Heart left ventricle (tissue), 16 donors: ENCODE measurements at regions of chr5 and their contacts with region 1.

Region 1: GRCh38 chr5:82165740-82166530 is 112.2 kb downstream of the RPS23 start:
- DNase-seq: peak in 4 of 5 donors; percentile 64 to 81 (median 78)
- ATAC-seq: peak; percentile 98 to 100 (median 100)
- H3K4me3 ChIP-seq: no peak overlapping the region
- H3K27ac ChIP-seq: peak overlapping the region in 10 of 12 donors; percentile 5 to 55 (median 38)
- H3K4me1 ChIP-seq: peaks cover 0 to 26% (median 12%) of the 10 kb centered on the region in 12 donors
- H3K27me3 ChIP-seq: no peaks in the 10 kb centered on the region
- CTCF ChIP-seq: peak; percentile 53 to 87 (median 76)
- POLR2A ChIP-seq: no peak

Region 2: GRCh38 chr5:81420039-81420667 is 745.8 kb before region 1 on chr5:
- intact Hi-C with region 1: loop called in 8 of 10 experiments (anchors 2 to 5 kb)
- DNase-seq: no peak
- ATAC-seq: no peak
- H3K4me3 ChIP-seq: no peak overlapping the region
- H3K27ac ChIP-seq: no peak overlapping the region
- H3K4me1 ChIP-seq: peaks cover 0 to 6% (median under 1%) of the 10 kb centered on the region in 12 donors
- H3K27me3 ChIP-seq: no peaks in the 10 kb centered on the region
- CTCF ChIP-seq: no peak
- POLR2A ChIP-seq: no peak

Region 3: DNA sequence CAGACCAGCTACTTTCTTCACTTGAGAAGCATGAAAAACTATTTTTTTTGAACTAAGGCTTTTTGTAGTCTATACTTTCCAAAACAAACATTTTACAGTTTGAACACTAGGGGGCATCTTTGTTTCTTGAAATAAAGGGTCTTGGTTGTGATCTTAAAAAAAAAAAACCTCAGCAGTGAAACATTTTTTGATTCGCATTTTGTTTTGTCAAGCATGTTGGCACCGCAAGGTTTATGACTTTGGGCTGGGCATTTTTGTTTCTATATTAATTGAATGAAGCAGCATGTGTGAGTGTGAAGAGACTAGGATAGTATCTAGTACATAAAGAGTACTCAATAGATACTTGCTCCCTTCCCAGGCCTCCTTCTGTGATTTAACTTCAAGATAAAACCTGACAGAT is 740.4 kb before region 1 on chr5:
- intact Hi-C with region 1: loop called (anchors 2 to 5 kb)
- DNase-seq: no peak
- ATAC-seq: peak in 3 of 4 donors; percentile 35 to 62 (median 59)
- H3K4me3 ChIP-seq: no peak overlapping the region
- H3K27ac ChIP-seq: peak overlapping the region in 4 of 12 donors; percentile 1 to 28 (median 7)
- H3K4me1 ChIP-seq: peaks cover 4 to 26% (median 12%) of the 10 kb centered on the region in 12 donors
- H3K27me3 ChIP-seq: no peaks in the 10 kb centered on the region
- CTCF ChIP-seq: peak; percentile 56 to 82 (median 66)
- POLR2A ChIP-seq: no peak

Region 4: DNA sequence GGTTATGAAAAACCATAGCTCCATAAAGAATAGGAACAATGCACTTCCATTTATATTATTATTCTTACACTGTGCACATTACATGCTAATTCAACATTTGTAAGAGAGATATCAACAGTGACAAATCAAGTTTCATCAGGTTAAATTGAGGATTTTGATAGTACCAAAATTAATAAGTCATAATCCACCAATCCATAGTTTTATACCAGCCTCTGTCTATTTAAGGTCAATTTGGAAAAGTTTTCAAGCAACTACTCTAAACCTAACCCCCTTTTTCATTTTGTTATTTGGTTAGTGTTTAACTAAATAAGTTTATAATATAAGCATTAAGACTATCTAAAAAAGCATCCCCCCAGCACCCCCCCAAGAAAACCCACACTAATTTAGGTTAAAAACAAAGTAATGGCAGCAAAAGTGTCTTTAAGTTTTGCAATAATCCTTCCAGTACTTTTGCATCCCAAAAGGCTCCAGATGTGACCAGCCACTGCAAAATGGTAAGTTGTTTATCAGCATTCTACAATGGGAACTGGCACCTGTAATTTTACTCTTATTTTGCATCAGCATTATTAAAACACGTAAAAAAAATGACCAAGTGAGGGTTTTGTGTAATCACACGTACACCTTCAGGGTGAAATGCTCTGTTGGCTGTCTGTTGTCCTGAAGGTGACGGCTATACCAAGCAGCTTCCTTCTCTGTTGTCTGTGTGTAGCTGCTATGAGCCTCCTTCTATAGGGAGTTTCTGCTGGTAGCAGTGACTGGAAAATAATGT is 378.3 kb before region 1 on chr5:
- intact Hi-C with region 1: loop called in 1 of 10 experiments (anchors 10 kb)
- DNase-seq: peak in 4 of 5 donors; percentile 53 to 78 (median 66)
- ATAC-seq: peak; percentile 60 to 72 (median 63)
- H3K4me3 ChIP-seq: peak overlapping the region in 3 of 12 donors; percentile 4 to 30 (median 20)
- H3K27ac ChIP-seq: peak overlapping the region in 9 of 12 donors; percentile 11 to 42 (median 21)
- H3K4me1 ChIP-seq: peaks cover 0 to 30% (median 19%) of the 10 kb centered on the region in 12 donors
- H3K27me3 ChIP-seq: no peaks in the 10 kb centered on the region
- CTCF ChIP-seq: no peak
- POLR2A ChIP-seq: no peak

Region 5: DNA sequence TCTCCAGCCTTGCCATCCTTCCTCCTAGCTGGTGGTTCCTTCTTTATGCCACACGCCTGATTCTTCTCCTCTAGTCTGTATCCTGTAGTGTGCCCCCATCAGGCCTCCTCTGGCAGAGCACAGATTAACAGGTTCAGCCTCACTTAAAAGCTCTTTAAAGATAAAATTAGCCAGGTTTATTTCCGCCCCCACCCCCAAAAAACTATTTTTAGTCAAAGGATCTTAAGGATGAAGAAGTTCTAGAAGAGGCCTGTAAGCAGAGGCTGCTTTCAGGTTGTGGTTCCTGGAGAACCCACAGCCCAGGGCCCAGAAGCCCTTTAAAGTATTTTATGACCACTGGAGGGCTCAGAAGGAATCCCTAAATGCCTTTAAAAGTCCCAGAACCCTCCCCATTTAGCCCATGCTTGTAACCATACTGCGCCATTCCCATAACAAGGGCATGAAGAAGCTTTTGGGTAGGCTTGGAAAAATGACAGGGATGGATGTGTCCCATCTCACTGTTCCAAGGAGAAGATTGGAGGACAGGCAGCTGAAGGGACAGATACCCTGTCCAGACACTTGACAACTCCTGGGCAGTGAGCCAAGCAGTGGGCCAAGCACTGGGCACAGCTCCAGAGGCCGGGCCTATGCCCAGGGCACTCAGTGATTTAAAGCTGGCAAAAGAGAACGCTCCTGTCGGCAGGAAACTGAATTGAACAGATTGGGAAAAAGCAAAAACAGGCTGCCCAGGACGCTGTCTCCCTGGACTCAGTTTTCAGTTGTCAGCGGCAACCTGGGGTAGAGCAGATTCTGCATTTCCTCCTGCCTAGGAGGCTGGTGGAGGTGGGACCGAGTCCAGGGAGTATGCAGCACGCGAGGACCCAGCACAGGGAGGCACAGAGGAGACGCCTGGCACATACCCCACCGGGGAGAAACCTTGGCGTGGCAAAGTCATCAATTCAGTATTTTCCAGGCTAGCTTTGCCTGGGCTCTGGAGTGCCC is 308.7 kb before region 1 on chr5:
- intact Hi-C with region 1: loop called in 6 of 10 experiments (anchors 5 to 10 kb)
- DNase-seq: peak; percentile 86 to 94 (median 88)
- ATAC-seq: peak; percentile 95 to 96 (median 96)
- H3K4me3 ChIP-seq: peak overlapping the region in 6 of 12 donors; percentile 9 to 37 (median 24)
- H3K27ac ChIP-seq: peak overlapping the region; percentile 64 to 90 (median 74)
- H3K4me1 ChIP-seq: peaks cover 0 to 55% (median 22%) of the 10 kb centered on the region in 12 donors
- H3K27me3 ChIP-seq: no peaks in the 10 kb centered on the region
- CTCF ChIP-seq: peak in 10 of 12 donors; percentile 4 to 48 (median 23)
- POLR2A ChIP-seq: no peak

Region 6: GRCh38 chr5:81971712-81972495 is 194.0 kb before region 1 on chr5 and contains the start of gene ATG10:
- intact Hi-C with region 1: loop called in 2 of 10 experiments (anchors 2 to 10 kb)
- DNase-seq: peak; percentile 93 to 97 (median 94)
- ATAC-seq: peak; percentile 96 to 100 (median 99)
- H3K4me3 ChIP-seq: peak within 1 kb of the TSS; percentile 57 to 92 (median 73)
- H3K27ac ChIP-seq: peak within 1 kb of the TSS; percentile 91 to 100 (median 98)
- H3K4me1 ChIP-seq: peaks cover 0 to 15% (median 6%) of the 10 kb centered on the region in 12 donors
- H3K27me3 ChIP-seq: no peaks in the 10 kb centered on the region
- CTCF ChIP-seq: no peak
- POLR2A ChIP-seq: peak; percentile 70 to 98
- total RNA-seq, gene ATG10: 2.7 to 10.7 (median 6.3) TPM

Region 7: GRCh38 chr5:82107267-82107666 is 58.7 kb before region 1 on chr5:
- intact Hi-C with region 1: loop called in 2 of 10 experiments (anchors 2 to 5 kb)
- DNase-seq: no peak
- ATAC-seq: no peak
- H3K4me3 ChIP-seq: no peak overlapping the region
- H3K27ac ChIP-seq: peak overlapping the region in 1 of 12 donors; percentile 46
- H3K4me1 ChIP-seq: peaks cover 0 to 25% (median 16%) of the 10 kb centered on the region in 12 donors
- H3K27me3 ChIP-seq: no peaks in the 10 kb centered on the region
- CTCF ChIP-seq: peak in 10 of 12 donors; percentile 15 to 61 (median 46)
- POLR2A ChIP-seq: no peak

Region 8: DNA sequence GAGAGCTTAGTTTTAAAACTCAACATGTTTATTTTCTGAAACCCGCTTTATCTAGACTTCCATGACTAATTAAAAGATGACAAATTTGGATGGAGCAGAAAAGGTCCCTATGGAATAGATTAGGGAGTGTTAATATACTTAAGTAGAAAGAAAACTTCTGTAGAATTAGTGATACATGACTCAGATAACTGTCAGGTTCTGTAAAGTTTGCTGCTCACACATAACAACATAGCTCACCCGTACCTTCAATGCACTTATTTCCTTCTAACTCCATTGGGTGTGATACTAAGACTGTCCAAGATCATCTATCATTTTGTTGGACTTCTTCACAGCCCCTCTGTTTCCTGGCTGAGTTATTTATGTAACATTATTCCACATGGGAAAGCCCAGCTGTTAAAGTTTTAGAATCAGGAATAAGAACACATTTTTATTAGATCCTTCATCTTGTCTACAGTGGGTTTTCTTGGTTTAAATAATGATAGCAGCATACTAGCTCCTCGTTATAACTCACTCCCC is 883.5 kb after region 1 on chr5:
- intact Hi-C with region 1: no loop called
- DNase-seq: no peak
- ATAC-seq: peak in 2 of 4 donors; percentile 34 to 56
- H3K4me3 ChIP-seq: no peak overlapping the region
- H3K27ac ChIP-seq: peak overlapping the region in 1 of 12 donors; percentile 16
- H3K4me1 ChIP-seq: peaks cover 0 to 12% (median 0%) of the 10 kb centered on the region in 12 donors
- H3K27me3 ChIP-seq: no peaks in the 10 kb centered on the region
- CTCF ChIP-seq: no peak
- POLR2A ChIP-seq: no peak